Activated CD4-positive, alpha-beta T cell treated with anti-CD3 and anti-CD28 coated beads for 36 hours (primary cell): ENCODE measurements at regions of chr18 and their contacts with region 1.

Region 1: GRCh38 chr18:63161761-63162195 is 157.8 kb downstream of the BCL2 start:
- DNase-seq: peak; percentile 90
- ATAC-seq: peak; percentile 79
- H3K4me3 Mint-ChIP-seq: peak overlapping the region; percentile 73
- H3K27ac Mint-ChIP-seq: peak overlapping the region; percentile 95
- H3K4me1 Mint-ChIP-seq: peaks cover 78% of the 10 kb centered on the region
- H3K27me3 Mint-ChIP-seq: no peaks in the 10 kb centered on the region

Region 2: DNA sequence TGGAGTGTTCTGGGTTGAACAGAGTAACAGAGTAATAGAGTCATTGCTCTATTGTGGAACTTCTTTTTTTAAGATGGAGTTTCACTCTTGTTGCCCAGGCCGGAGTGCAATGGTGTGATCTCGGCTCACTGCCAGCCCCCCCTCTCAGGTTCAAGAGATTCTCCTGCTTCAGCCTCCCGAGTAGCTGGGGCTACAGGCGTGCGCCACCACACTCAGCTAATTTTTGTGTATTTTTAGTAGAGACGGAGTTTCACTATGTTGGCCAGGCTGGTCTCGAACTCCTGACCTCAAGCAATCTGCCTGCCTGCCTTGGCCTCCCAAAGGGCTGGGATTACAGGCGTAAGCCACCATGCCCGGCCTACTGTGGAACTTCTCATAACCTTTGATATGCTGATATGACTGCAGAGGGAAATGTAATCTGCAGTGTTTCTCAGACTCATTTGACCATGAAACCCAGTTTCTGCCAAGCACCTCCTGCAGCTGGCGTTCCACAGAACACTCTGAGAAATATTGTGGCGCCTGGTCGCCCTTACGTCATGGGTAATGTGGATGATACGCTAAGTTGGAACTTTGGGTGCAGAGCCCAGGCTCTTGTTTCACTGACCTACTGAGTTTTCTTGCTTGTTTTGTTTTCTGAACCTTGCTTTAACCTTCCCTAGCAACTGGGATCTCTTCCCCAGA is 56.0 kb before region 1 on chr18:
- CTCF ChIA-PET with region 1: no interaction called
- POLR2A ChIA-PET with region 1: interaction called, 3 read pairs
- intact Hi-C with region 1: loop called (anchors 1 to 2 kb)
- DNase-seq: no peak
- ATAC-seq: no peak
- H3K4me3 Mint-ChIP-seq: no peak overlapping the region
- H3K27ac Mint-ChIP-seq: no peak overlapping the region
- H3K4me1 Mint-ChIP-seq: peaks cover 29% of the 10 kb centered on the region
- H3K27me3 Mint-ChIP-seq: peaks cover 4% of the 10 kb centered on the region

Region 3: GRCh38 chr18:63199743-63200241 is 38.0 kb after region 1 on chr18:
- CTCF ChIA-PET with region 1: interaction called, 4 read pairs
- POLR2A ChIA-PET with region 1: interaction called, 3 read pairs
- intact Hi-C with region 1: loop called (anchors 1 kb)
- DNase-seq: peak; percentile 56
- ATAC-seq: peak; percentile 82
- H3K4me3 Mint-ChIP-seq: no peak overlapping the region
- H3K27ac Mint-ChIP-seq: no peak overlapping the region
- H3K4me1 Mint-ChIP-seq: peaks cover 42% of the 10 kb centered on the region
- H3K27me3 Mint-ChIP-seq: no peaks in the 10 kb centered on the region

Region 4: GRCh38 chr18:63237881-63238667 is 76.3 kb after region 1 on chr18:
- CTCF ChIA-PET with region 1: interaction called, 3 read pairs
- POLR2A ChIA-PET with region 1: no interaction called
- intact Hi-C with region 1: loop called in 1 of 2 experiments (anchors 1 kb)
- DNase-seq: no peak
- ATAC-seq: no peak
- H3K4me3 Mint-ChIP-seq: no peak overlapping the region
- H3K27ac Mint-ChIP-seq: peak overlapping the region; percentile 53
- H3K4me1 Mint-ChIP-seq: peaks cover 71% of the 10 kb centered on the region
- H3K27me3 Mint-ChIP-seq: no peaks in the 10 kb centered on the region

Region 5: DNA sequence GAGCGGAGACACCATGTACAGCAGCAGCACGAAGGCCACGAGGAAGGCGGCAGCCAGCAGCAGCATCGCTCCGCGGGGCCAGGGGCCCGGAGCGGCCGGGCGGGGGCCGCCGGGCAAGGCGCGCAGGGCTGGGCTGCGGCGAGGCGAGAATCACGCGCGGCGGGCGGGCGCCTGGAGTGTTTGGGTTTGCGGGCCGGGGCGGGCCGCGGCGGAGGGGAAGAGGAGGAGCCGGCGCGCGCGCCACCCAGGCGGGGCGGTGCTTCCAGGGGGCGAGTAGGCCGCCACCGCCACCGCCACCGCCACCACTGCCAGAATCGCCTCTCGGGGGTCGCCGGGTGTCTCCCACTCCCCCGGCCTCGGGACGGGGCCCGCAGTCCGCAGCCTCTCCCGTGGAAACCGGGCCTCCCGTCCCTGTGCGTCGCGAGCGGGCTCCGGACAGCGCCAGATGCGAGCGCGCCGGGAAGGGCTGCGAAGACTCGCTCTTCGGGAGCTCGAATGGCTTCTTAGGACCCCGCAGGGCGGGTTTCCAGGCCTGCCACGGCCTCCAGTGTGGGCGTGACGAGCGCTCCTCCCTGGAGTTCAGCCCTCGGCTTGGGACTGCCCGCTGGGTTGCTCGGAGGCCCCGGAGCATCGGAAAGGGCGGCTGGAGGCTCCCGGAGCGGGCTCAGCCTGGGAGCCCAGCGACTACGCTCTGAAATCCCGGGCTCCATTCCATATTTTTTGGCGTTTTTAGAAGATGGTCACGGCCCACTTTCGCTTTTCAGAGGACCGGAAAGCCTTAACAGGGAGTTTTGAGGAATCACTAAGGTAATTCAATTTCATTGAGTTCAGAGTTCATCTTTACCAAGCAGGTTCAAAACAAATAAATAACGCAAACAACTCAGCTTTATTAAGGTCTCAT is 205.5 kb after region 1 on chr18 and contains the start of gene KDSR:
- CTCF ChIA-PET with region 1: no interaction called
- POLR2A ChIA-PET with region 1: no interaction called
- intact Hi-C with region 1: loop called in 1 of 2 experiments (anchors 2 kb)
- DNase-seq: peak; percentile 92
- ATAC-seq: peak; percentile 85
- H3K4me3 Mint-ChIP-seq: peak within 1 kb of the TSS; percentile 96
- H3K27ac Mint-ChIP-seq: peak within 1 kb of the TSS; percentile 85
- H3K4me1 Mint-ChIP-seq: peaks cover 36% of the 10 kb centered on the region
- H3K27me3 Mint-ChIP-seq: no peaks in the 10 kb centered on the region
- total RNA-seq, gene KDSR: 72.6 to 78.6 TPM

Region 6: DNA sequence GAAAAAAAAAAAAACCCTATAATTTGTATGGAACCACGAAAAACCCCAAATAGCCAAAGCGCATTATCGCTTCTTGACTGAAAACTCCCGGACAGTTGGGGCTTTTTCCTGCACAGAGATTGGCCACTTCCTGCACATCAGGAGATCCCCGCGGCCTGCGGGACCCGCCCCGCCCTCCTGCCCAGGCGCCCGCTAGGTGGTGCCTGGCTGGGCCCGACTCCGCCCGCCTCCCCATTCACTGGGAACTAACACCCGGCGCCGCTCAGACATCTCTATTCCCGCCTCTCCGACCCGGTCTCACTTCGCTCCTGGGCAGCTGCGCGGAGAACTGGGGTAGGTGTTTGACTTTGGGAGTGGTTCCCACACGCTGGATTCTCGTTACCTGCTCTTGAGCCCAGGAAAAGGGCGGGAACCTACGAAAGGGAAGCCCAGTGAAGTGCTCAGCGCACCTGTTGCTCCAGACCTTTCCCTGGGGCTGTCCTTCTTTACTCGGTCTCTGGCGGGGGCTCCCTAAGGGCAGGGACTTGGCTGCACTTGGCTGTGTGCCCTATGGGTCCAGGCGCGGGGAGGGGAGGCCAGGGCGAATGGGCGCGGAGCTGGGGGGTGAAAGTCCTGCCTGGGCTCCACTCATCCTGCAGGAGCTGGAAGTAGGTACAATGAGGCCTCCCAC is 787.4 kb after region 1 on chr18 and contains the start of gene HMSD:
- CTCF ChIA-PET with region 1: no interaction called
- POLR2A ChIA-PET with region 1: no interaction called
- intact Hi-C with region 1: loop called in 1 of 2 experiments (anchors 2 kb)
- DNase-seq: peak; percentile 87
- ATAC-seq: peak; percentile 87
- H3K4me3 Mint-ChIP-seq: peak within 1 kb of the TSS; percentile 77
- H3K27ac Mint-ChIP-seq: peak within 1 kb of the TSS; percentile 86
- H3K4me1 Mint-ChIP-seq: peaks cover 43% of the 10 kb centered on the region
- H3K27me3 Mint-ChIP-seq: peaks cover 27% of the 10 kb centered on the region
- total RNA-seq, gene HMSD: 18.8 to 26.7 TPM